ENCODE measurements at regions of chr1 and their contacts with region 1.

Region 1: GRCh38 chr1:247078261-247079140 is at the start of gene ZNF670:
- DNase-seq: peak; percentile 97
- H3K4me3 Mint-ChIP-seq: peak within 1 kb of the TSS; percentile 84
- H3K27ac Mint-ChIP-seq: peak within 1 kb of the TSS; percentile 67
- H3K4me1 Mint-ChIP-seq: peaks cover 10% of the 10 kb centered on the region
- H3K27me3 Mint-ChIP-seq: no peaks in the 10 kb centered on the region
- CTCF ChIP-seq: no peak
- total RNA-seq, gene ZNF670: 3.9 and 6.1 TPM in 2 replicates

Region 2: DNA sequence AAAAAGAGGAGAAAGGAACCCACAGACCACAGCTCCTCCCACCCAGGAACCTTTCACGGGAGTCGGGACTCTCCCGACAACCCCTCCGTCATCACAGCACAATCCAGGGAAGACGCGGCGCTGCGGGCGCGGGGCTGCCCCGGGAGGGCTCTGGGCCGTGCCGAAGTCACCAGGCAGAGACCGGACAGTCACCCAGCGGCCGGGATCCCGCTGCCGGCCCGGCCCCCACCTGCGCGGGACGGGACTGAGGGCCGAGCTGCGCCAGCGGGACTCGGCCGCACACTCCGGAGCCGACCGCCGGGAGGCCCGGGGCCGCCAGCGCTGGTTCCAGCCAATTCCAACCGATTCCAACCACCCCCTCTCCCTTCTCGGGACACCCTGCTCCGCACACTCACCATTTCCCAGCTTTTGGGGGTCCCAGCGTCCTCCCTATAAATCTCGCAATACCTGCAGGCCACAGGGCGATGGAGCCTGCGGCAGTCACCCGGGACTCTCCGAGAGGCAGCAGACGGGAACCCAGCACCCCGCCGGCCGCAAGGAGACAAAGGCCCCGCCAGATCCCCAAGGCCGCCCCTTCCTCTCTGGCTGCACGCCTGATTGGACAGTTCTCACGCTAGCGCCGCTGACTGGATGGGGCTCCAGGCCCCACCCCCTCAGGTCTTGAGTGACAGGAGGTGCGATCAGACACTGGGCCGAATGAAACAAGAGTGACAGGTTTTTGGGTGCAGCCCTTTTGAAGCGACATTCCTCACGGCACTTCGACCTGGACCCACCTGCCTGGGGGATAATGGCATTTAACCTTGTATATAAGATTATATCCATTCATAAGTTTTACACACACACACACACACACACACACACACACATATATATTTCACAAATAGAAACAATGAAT is 70.7 kb before region 1 on chr1 and contains the start of gene ZNF695:
- CTCF ChIA-PET with region 1: no interaction called
- intact Hi-C with region 1: loop called (anchors 5 kb)
- DNase-seq: peak; percentile 99
- H3K4me3 Mint-ChIP-seq: peak within 1 kb of the TSS; percentile 94
- H3K27ac Mint-ChIP-seq: peak within 1 kb of the TSS; percentile 88
- H3K4me1 Mint-ChIP-seq: no peaks in the 10 kb centered on the region
- H3K27me3 Mint-ChIP-seq: no peaks in the 10 kb centered on the region
- CTCF ChIP-seq: no peak
- total RNA-seq, gene ZNF695: 18.2 and 19.6 TPM in 2 replicates

Region 3: GRCh38 chr1:247243738-247244137 is 165.2 kb after region 1 on chr1:
- CTCF ChIA-PET with region 1: no interaction called
- intact Hi-C with region 1: no loop called
- DNase-seq: no peak
- H3K4me3 Mint-ChIP-seq: no peak overlapping the region
- H3K27ac Mint-ChIP-seq: no peak overlapping the region
- H3K4me1 Mint-ChIP-seq: no peaks in the 10 kb centered on the region
- H3K27me3 Mint-ChIP-seq: no peaks in the 10 kb centered on the region
- CTCF ChIP-seq: no peak